Activated T-helper 1 cell treated with anti-CD3 and anti-CD28 coated beads, Interleukin-12 subunit alpha, Interleukin-12 subunit beta, Interleukin-2, Interleukin-4 antibody, amounts not matched to agents 30 ng/mL and 10 ng/mL and 1 ng/mL, durations not matched to agents 14 hours and 24 hours and 36 hours (primary cell): ENCODE measurements at regions of chr4 and their contacts with region 1.

Region 1: DNA sequence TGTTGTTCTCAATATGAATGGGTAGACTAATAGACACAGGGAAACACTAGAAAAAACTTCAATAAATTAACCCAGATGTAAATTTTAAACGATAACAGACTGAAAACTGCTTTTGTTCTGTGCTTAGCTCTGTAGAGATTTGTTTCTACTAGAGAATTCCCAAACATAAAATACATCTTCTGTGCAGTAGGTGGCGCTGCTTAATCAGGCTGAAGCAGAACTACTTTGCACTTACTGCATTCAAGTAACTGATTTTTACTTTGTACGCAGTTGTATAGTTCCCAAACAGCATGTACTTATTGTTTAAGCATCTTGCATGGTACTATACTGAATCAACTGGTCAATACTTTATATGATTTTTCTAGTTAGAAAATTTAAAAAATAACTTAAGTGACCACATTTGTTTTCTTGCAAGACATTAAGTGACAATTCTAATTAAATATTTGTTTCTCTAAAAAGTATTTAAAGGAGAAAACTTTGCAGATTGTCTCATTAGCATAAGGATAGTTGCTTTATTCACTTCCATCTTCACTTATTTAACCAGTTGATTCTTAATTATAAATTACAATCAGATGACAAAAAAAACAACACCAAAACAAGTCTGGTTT is 490.6 kb downstream of the IL15 start:
- DNase-seq: peak; percentile 27
- H3K4me3 Mint-ChIP-seq: no peak overlapping the region
- H3K27ac Mint-ChIP-seq: no peak overlapping the region
- H3K4me1 Mint-ChIP-seq: peaks cover 18% of the 10 kb centered on the region
- H3K27me3 Mint-ChIP-seq: no peaks in the 10 kb centered on the region

Region 2: DNA sequence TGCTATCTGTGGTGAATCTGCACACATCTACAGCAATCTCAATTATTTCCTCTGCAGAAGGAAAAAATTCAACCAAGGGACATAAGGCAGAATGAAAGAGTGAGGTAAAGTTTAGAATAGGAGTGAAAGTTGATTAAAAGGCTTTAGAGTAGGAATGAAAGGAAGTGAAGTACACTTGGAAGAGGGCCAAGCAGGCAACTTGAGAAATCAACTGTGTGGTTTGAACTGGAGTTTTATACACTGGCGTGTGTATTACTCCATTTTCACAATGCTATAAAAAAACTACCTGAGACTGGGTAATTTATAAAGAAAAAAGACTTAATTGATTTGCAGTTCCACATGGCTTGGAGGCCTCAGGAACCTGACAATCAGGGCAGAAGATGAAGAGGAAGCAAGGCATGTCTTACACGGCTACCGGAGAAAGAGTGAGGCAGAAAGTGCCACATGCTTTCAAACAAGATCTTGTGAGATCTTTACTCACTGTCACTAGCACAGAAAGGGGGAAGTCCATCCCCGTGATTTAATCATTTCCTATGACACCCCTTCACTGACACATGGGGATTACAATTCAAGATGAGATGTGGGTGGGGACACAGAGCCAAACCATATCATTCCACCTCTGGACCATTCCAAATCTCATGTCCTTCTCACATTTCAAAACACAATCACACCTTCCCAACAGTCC is 255.8 kb before region 1 on chr4:
- intact Hi-C with region 1: no loop called
- DNase-seq: no peak
- H3K4me3 Mint-ChIP-seq: no peak overlapping the region
- H3K27ac Mint-ChIP-seq: no peak overlapping the region
- H3K4me1 Mint-ChIP-seq: no peaks in the 10 kb centered on the region
- H3K27me3 Mint-ChIP-seq: no peaks in the 10 kb centered on the region

Region 3: GRCh38 chr4:142085513-142086292 is 41.3 kb before region 1 on chr4:
- intact Hi-C with region 1: loop called (anchors 1 kb)
- DNase-seq: no peak
- H3K4me3 Mint-ChIP-seq: no peak overlapping the region
- H3K27ac Mint-ChIP-seq: no peak overlapping the region
- H3K4me1 Mint-ChIP-seq: no peaks in the 10 kb centered on the region
- H3K27me3 Mint-ChIP-seq: no peaks in the 10 kb centered on the region

Region 4: DNA sequence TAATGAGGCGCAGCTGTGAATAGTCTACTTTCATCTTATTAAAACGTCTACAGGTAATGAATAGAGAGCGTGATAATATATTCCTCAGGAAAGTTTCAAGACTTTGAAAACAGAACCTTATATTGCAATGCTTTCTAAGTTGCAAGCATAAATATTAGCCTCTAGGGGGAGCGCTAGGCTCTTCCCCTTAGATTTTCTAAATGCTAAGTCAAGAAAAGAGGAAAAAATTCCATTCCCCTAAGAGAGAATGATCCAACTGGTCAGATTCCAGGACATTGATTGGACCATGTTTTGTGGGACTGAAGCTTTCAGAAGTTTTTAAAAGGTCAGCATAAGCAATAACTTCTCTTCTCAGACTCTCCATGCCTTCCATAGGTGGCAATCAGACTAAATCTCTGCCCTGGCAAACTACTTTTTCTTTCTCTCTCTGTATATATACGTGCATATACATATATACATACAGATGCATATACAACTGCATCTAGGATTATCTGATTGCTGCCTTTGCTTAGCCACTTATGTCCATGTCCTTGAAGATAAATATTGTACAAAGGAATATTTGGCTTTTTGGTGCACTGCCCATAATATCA is 226.2 kb after region 1 on chr4:
- intact Hi-C with region 1: loop called (anchors 2 kb)
- DNase-seq: no peak
- H3K4me3 Mint-ChIP-seq: peak overlapping the region; percentile 42
- H3K27ac Mint-ChIP-seq: no peak overlapping the region
- H3K4me1 Mint-ChIP-seq: peaks cover 78% of the 10 kb centered on the region
- H3K27me3 Mint-ChIP-seq: no peaks in the 10 kb centered on the region

Region 5: DNA sequence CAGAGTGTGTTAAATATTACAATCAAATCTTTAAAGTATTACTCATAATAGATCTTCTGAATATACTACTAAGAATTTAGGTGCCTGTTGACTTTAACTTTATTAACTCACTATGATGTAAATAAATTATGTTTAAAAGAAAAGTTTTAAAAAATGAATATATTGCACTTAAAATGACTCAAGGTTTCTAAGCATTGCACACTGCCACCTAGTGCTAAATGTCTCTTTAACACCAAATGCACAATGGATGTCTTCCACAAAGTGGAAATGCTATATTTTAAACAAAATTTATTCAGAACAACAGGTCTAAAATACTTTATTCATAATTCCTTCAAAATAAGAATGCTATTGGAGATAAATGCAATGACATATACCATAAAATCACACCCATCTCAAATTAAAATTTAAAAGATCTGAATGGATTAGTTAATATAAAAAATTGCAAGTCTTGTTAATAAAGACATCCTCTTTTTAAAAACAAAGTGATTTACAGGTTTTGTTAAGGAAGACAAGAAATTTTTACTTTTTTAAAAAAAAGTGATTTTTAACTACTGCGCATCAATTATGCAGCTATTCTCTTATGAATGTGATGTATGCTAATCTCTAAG is 713.6 kb after region 1 on chr4:
- intact Hi-C with region 1: loop called (anchors 1 kb)
- DNase-seq: no peak
- H3K4me3 Mint-ChIP-seq: no peak overlapping the region
- H3K27ac Mint-ChIP-seq: no peak overlapping the region
- H3K4me1 Mint-ChIP-seq: peaks cover 11% of the 10 kb centered on the region
- H3K27me3 Mint-ChIP-seq: peaks cover 7% of the 10 kb centered on the region